ENCODE measurements at regions of chr14 and their contacts with region 1.

Region 1: DNA sequence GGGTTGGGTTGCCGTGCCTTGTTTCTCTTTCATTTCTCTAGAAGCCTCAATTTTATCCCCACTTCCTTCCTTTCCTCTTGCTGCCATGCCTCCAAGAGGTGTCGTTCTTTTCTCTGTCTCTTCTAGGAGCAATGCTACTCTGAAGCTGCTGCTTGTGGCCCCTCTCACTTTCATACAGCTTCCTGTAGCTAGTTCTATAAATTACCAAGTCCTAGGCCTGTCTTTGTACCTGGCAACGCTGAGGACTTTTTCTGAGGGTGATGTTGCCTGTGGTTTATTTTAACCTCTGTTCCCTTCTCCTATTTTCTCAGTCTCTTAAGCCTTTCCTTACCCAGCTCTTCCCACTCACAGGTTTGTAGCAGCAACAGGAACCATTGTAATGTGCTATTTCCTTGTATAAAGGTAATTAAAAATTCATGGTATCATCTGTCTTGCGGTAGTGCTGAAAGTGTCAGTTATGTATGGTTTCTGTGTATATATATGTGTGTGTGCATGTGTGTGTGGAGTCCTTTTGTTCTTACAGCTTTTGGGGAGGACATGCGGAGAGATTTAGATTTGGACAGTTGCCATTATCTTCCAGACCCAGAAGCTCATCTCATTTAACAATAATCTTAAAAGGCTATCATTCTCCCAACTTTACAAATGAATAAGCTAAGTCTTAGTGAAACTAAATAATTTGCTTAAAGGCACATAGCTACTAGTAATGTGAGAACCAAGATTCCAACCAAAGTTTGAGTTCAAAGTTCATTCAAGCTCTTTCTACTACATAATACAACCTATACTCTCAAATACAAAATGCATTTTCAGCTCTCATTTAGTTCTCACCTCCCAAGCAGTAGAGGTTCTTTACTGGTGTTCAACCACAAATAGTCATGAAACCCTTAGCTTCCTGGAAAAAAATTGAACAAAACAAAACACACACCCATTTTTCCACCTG is 43.8 kb downstream of the DDHD1 start:
- DNase-seq: peak in 1 of 2 donors; percentile 83
- ATAC-seq: peak; percentile 78 to 85 (median 84)
- H3K4me3 ChIP-seq: peak overlapping the region; percentile 36
- H3K4me3 Mint-ChIP-seq: no peak overlapping the region
- H3K27ac ChIP-seq: peak overlapping the region; percentile 85
- H3K27ac Mint-ChIP-seq: no peak overlapping the region
- H3K4me1 ChIP-seq: peaks cover 31% of the 10 kb centered on the region
- H3K4me1 Mint-ChIP-seq: peaks cover 10 to 11% of the 10 kb centered on the region in 2 donors
- H3K27me3 ChIP-seq: no peaks in the 10 kb centered on the region
- H3K27me3 Mint-ChIP-seq: no peaks in the 10 kb centered on the region
- CTCF ChIP-seq: no peak

Region 2: DNA sequence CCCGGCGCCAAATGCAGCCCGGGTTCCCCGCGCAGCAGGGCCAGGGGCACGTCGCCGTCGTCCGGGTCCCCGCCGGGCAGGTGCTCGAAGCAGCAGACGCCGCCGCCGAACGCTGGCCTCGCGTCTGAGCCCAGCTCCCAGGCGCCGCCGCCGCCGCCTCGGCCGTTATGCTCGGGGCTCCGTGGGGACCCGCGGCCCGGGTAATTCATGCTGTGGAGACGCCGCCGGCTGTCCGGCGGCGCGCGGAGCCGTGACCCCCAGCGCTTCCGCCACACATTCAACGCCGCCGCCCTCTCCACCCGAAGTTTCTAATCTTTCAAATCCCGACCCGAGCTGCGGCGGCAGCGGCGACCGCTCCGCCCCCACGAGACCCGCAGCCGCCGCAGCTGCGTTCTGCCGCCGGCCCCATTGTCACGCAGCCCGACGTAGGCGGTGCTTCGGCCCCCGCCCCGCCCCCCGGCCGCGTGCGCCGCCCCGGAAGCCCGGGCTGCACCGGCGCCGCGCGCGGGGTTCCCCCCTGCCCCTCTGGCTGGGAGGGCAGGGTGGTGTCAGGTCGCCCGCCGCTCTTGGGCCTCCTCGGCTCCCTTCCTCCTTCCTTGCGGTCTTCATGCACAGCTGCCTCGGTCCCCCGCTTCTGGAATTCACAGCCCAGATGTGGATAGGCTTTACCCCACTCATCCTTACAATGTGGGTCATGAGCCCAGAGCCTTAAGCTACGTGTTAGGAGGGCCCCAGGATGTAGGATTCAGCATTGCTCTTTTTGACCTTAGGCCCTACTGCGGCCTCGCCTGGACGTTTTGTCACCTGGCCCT is 43.7 kb after region 1 on chr14 and contains the start of gene DDHD1:
- intact Hi-C with region 1: loop called (anchors 1 kb)
- DNase-seq: peak; percentile 88 to 93
- ATAC-seq: peak; percentile 82 to 94 (median 86)
- H3K4me3 ChIP-seq: peak within 1 kb of the TSS; percentile 90
- H3K4me3 Mint-ChIP-seq: peak within 1 kb of the TSS; percentile 100
- H3K27ac ChIP-seq: peak within 1 kb of the TSS; percentile 90
- H3K27ac Mint-ChIP-seq: peak within 1 kb of the TSS; percentile 98 to 100
- H3K4me1 ChIP-seq: peaks cover 29% of the 10 kb centered on the region
- H3K4me1 Mint-ChIP-seq: peaks cover 52 to 59% of the 10 kb centered on the region in 2 donors
- H3K27me3 ChIP-seq: no peaks in the 10 kb centered on the region
- H3K27me3 Mint-ChIP-seq: no peaks in the 10 kb centered on the region
- CTCF ChIP-seq: no peak
- total RNA-seq, gene DDHD1: 76.6 to 82.3 (median 80.9) TPM

Region 3: DNA sequence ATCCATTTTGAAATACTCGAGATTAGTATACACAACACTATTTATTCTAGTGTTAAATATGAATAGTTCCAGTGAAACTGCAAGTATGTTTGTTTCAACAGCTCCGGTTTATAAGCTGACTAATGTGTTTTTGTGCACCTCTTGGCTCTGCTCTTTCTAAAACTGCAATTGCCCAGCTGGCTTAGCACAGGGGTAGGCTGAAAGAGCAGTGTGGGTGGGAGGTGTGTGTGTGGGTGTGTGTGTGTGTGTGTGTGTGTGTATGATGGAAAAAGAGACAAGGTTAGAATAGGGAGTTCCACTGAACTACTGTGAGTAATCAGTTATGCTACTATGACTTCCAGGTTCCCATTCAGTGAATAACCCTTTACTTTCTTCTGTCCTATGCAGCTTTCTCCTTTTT is 81.6 kb after region 1 on chr14:
- intact Hi-C with region 1: no loop called
- DNase-seq: no peak
- ATAC-seq: no peak
- H3K4me3 ChIP-seq: no peak overlapping the region
- H3K4me3 Mint-ChIP-seq: no peak overlapping the region
- H3K27ac ChIP-seq: no peak overlapping the region
- H3K27ac Mint-ChIP-seq: no peak overlapping the region
- H3K4me1 ChIP-seq: no peaks in the 10 kb centered on the region
- H3K4me1 Mint-ChIP-seq: no peaks in the 10 kb centered on the region
- H3K27me3 ChIP-seq: no peaks in the 10 kb centered on the region
- H3K27me3 Mint-ChIP-seq: no peaks in the 10 kb centered on the region
- CTCF ChIP-seq: no peak

Region 4: DNA sequence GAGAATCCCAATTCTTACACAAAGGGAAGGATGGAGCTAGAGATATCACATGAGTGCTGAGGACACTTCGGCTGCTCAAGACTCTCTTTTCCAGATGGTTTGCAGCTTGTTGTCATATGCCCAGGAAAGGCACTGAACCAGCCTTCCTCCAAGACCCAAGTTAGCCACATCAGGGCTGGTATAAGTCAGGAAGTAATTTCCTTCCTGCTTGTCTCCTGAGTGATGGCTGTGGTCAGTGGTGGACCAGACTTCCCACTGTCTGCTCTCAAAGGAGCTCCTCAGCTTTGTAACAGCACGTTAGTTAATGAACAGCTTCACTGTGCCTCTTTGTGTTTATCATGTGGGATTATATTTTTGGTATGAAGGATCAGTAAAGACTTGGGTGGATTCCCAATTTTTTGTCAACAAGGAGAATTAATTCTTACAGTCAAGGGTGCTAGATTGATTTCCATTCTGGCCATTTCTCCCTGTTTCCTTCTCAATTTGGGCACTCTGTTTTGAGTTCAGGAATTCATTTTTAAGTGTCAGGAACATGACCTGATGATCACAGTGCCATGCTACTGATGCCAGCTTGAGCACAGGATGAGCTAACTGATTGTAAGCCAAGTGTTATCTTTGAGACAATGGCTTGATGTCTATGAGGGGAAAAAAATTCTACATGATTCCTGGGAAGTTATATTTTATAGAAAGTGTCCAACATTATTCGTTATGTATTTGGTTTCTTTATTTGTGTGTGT is 1647.5 kb after region 1 on chr14:
- intact Hi-C with region 1: no loop called
- DNase-seq: no peak
- ATAC-seq: no peak
- H3K4me3 ChIP-seq: no peak overlapping the region
- H3K4me3 Mint-ChIP-seq: no peak overlapping the region
- H3K27ac ChIP-seq: no peak overlapping the region
- H3K27ac Mint-ChIP-seq: no peak overlapping the region
- H3K4me1 ChIP-seq: peaks cover 10% of the 10 kb centered on the region
- H3K4me1 Mint-ChIP-seq: no peaks in the 10 kb centered on the region
- H3K27me3 ChIP-seq: no peaks in the 10 kb centered on the region
- H3K27me3 Mint-ChIP-seq: peaks cover 24 to 42% of the 10 kb centered on the region in 2 donors
- CTCF ChIP-seq: no peak

Measured in natural killer cell (primary cell).